Activated CD4-positive, alpha-beta T cell treated with anti-CD3 and anti-CD28 coated beads, Interleukin-2, amount 10 ng/mL, durations not matched to agents 24 days and 14 days (primary cell): ENCODE measurements at regions of chr18 and their contacts with region 1.

Region 1: DNA sequence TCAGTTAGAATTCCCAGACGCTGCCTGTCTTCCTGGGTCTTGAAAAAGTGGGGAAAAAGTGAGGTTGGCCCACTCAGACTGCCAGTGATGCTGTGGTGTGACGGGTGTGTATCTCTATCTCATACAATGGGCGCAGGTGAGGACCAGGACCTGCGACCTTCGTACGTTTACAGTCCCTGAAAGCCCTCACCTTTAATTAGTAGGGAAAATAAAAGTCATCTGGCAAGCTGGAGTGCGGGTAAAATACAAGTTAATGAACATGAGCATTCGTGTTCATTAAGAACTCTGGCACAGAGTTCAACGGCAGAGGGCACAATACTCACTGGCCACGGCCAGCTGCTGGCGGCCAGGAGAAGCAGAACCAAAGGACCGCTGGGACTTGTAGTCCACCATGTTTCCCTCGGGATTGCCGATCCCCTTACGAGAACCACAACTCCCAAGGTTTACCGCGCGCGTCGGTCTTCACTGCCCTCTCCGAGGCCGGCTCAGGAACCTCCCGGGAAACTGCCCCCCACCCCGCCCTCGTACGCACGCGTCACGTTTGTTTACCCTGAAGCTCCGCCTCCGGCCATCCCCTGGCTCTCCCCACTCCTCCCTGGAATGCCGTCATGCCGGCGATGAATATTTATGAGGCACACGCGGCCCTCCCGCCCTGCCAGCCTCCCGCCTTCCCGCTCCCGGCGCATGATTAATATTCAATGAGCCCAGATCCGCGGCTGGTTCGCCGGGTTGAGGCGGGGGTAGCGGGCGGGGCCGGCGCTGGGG is 488 bp upstream of the PHLPP1 start:
- DNase-seq: peak; percentile 97
- H3K4me3 Mint-ChIP-seq: peak overlapping the region; percentile 87
- H3K27ac Mint-ChIP-seq: peak overlapping the region; percentile 86
- H3K4me1 Mint-ChIP-seq: peaks cover 19% of the 10 kb centered on the region
- H3K27me3 Mint-ChIP-seq: peaks cover 27% of the 10 kb centered on the region

Region 2: DNA sequence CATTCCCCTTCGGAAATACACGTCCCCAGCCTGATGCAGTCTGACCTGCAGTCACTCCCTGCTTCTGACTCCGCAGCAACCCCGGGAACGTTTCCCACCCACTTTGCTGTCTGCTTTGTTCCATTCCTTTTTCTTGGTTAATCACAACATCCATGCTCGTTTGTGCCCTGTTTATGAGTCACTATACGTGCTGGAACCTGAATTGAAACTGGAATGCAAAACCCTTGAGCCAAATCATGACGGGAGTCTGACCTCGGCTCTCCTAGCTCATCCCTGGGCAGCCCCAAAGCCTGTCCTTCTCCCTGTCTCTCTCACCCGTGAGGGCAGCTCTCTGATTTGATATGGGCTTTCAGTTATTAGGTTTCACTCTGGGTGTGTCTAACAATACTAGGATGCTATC is 764.9 kb before region 1 on chr18:
- intact Hi-C with region 1: loop called (anchors 5 kb)
- DNase-seq: peak; percentile 51
- H3K4me3 Mint-ChIP-seq: no peak overlapping the region
- H3K27ac Mint-ChIP-seq: no peak overlapping the region
- H3K4me1 Mint-ChIP-seq: peaks cover 38% of the 10 kb centered on the region
- H3K27me3 Mint-ChIP-seq: peaks cover 46% of the 10 kb centered on the region

Region 3: DNA sequence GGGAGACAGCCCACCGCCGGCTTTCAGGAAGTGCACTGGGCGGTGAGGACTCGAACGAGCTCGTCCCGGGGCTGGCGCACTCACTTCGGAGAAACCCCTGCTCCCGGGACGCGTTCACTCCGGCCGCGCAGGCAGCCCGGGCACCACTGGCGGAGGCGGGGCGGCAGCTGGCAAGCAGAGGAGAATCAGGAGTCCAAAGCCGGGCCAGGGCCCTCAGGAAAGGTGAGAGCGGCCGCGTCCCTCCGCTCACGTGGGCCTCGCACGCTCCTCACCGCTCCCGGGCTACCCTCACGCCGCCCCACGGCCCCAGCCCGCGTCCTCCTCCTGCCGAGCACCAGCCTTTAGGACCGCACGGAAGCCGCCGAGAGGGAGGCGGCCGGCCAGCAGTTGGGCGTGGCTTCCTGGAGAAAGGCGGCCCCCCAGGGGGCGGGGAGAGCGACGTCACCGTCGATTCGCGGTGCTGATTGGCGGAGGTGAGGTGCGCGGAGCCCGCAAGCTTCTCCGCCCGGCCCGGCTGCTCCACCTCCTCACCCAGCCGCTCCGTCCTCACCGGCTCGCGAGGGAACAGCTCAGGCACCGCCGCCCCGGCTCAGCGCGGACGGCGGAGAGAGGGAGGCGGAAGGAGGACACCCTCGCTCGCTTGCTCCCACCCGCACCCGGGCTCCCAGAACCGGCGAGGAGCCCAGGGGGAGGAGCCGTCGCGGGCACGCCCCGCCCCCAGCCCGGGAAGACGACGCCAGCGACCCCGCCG is 192.2 kb before region 1 on chr18 and contains the start of gene ZCCHC2:
- intact Hi-C with region 1: loop called (anchors 1 kb)
- DNase-seq: peak; percentile 100
- H3K4me3 Mint-ChIP-seq: peak within 1 kb of the TSS; percentile 93
- H3K27ac Mint-ChIP-seq: peak within 1 kb of the TSS; percentile 94
- H3K4me1 Mint-ChIP-seq: peaks cover 21% of the 10 kb centered on the region
- H3K27me3 Mint-ChIP-seq: no peaks in the 10 kb centered on the region
- total RNA-seq, gene ZCCHC2: 47.0 and 52.8 TPM in 2 replicates

Region 4: GRCh38 chr18:62537946-62538345 is 176.9 kb before region 1 on chr18:
- intact Hi-C with region 1: no loop called
- DNase-seq: no peak
- H3K4me3 Mint-ChIP-seq: no peak overlapping the region
- H3K27ac Mint-ChIP-seq: no peak overlapping the region
- H3K4me1 Mint-ChIP-seq: peaks cover 29% of the 10 kb centered on the region
- H3K27me3 Mint-ChIP-seq: no peaks in the 10 kb centered on the region

Region 5: DNA sequence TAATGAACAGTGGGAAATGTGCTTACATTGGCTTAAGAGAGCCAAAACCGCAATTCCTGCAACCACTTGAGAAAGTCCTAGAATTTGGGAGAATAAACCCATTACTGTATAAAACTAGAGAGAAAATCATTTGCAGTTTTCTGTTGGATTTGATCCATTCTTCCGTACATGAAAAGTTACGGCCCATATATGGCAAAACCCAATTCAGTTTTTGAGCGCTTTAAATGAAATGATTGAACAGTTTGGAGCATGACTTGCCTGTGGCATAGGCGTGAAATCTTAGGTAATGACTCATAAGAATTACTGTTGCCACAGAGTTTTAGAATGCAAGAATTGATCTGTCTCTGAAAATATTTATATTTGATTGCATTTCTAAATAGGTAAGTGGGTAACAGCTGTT is 52.5 kb after region 1 on chr18:
- intact Hi-C with region 1: loop called (anchors 5 kb)
- DNase-seq: no peak
- H3K4me3 Mint-ChIP-seq: no peak overlapping the region
- H3K27ac Mint-ChIP-seq: no peak overlapping the region
- H3K4me1 Mint-ChIP-seq: peaks cover 23% of the 10 kb centered on the region
- H3K27me3 Mint-ChIP-seq: no peaks in the 10 kb centered on the region

Region 6: GRCh38 chr18:62925031-62925688 is 210.3 kb after region 1 on chr18:
- intact Hi-C with region 1: no loop called
- DNase-seq: no peak
- H3K4me3 Mint-ChIP-seq: no peak overlapping the region
- H3K27ac Mint-ChIP-seq: no peak overlapping the region
- H3K4me1 Mint-ChIP-seq: no peaks in the 10 kb centered on the region
- H3K27me3 Mint-ChIP-seq: peaks cover 2% of the 10 kb centered on the region

Region 7: GRCh38 chr18:62957885-62958472 is 243.1 kb after region 1 on chr18:
- intact Hi-C with region 1: loop called (anchors 1 kb)
- DNase-seq: peak; percentile 89
- H3K4me3 Mint-ChIP-seq: no peak overlapping the region
- H3K27ac Mint-ChIP-seq: no peak overlapping the region
- H3K4me1 Mint-ChIP-seq: peaks cover 14% of the 10 kb centered on the region
- H3K27me3 Mint-ChIP-seq: no peaks in the 10 kb centered on the region

Region 8: GRCh38 chr18:63367053-63367953 is 652.5 kb after region 1 on chr18 and contains the start of gene KDSR:
- intact Hi-C with region 1: loop called (anchors 1 kb)
- DNase-seq: peak; percentile 96
- H3K4me3 Mint-ChIP-seq: peak within 1 kb of the TSS; percentile 91
- H3K27ac Mint-ChIP-seq: peak within 1 kb of the TSS; percentile 81
- H3K4me1 Mint-ChIP-seq: peaks cover 29% of the 10 kb centered on the region
- H3K27me3 Mint-ChIP-seq: no peaks in the 10 kb centered on the region
- total RNA-seq, gene KDSR: 83.9 and 86.9 TPM in 2 replicates

Region 9: GRCh38 chr18:63949068-63949737 is 1234.3 kb after region 1 on chr18 and contains the start of gene HMSD:
- intact Hi-C with region 1: loop called (anchors 5 kb)
- DNase-seq: peak; percentile 90
- H3K4me3 Mint-ChIP-seq: peak within 1 kb of the TSS; percentile 88
- H3K27ac Mint-ChIP-seq: peak within 1 kb of the TSS; percentile 91
- H3K4me1 Mint-ChIP-seq: peaks cover 37% of the 10 kb centered on the region
- H3K27me3 Mint-ChIP-seq: peaks cover 15% of the 10 kb centered on the region
- total RNA-seq, gene HMSD: 16.8 and 25.0 TPM in 2 replicates